Vagina (tissue), 2 donors: ENCODE measurements at regions of chr16 and their contacts with region 1.

Region 1: GRCh38 chr16:4271176-4272066 is 1.4 kb downstream of the TFAP4 start:
- DNase-seq: no peak
- H3K4me3 ChIP-seq: peak overlapping the region; percentile 69 to 96
- H3K27ac ChIP-seq: peak overlapping the region; percentile 91
- H3K4me1 ChIP-seq: peaks cover 15% of the 10 kb centered on the region
- H3K27me3 ChIP-seq: no peaks in the 10 kb centered on the region
- CTCF ChIP-seq: no peak
- POLR2A ChIP-seq: peak in 1 of 2 donors; percentile 49

Region 2: DNA sequence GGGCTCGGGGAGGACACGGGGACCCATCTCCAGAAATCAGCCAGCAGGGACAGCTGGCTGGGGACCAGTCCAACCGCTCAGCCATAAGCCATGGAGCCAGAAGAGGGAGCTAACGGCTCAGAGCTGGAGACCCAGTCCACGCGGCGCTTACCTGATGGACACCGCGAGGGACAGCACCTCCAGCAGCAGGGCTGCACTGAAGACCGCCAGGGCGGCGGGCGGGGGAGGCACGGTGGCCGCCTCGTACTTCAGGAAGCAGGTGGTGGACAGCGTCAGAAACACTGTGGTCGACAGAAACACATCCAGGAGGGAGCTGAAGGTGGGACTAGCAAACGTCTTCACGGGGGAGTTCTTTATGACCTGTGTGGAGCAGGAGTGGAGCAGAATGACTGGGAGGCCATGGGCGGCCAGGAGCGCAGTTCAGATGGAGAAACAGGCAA is 288.3 kb before region 1 on chr16:
- intact Hi-C with region 1: no loop called
- DNase-seq: no peak
- H3K4me3 ChIP-seq: no peak overlapping the region
- H3K27ac ChIP-seq: no peak overlapping the region
- H3K4me1 ChIP-seq: peaks cover 16% of the 10 kb centered on the region
- H3K27me3 ChIP-seq: no peaks in the 10 kb centered on the region
- CTCF ChIP-seq: peak; percentile 10 to 71 (median 22)
- POLR2A ChIP-seq: no peak

Region 3: GRCh38 chr16:4315186-4316109 is 44.0 kb after region 1 on chr16 and contains the start of gene GLIS2:
- intact Hi-C with region 1: loop called (anchors 5 kb)
- DNase-seq: peak in 1 of 2 donors; percentile 84
- H3K4me3 ChIP-seq: peak within 1 kb of the TSS; percentile 60 to 65
- H3K27ac ChIP-seq: peak within 1 kb of the TSS; percentile 93
- H3K4me1 ChIP-seq: peaks cover 58% of the 10 kb centered on the region
- H3K27me3 ChIP-seq: no peaks in the 10 kb centered on the region
- CTCF ChIP-seq: no peak
- POLR2A ChIP-seq: peak in 1 of 2 donors; percentile 49
- total RNA-seq, gene GLIS2: 6.9 TPM